ENCODE measurements at regions of chr19 and their contacts with region 1.

Region 1: GRCh38 chr19:45059278-45059965 is 16.9 kb downstream of the ZNF296 start:
- DNase-seq: peak; percentile 60 to 81 (median 67)
- ATAC-seq: peak; percentile 45 to 78 (median 69)
- H3K4me3 ChIP-seq: no peak overlapping the region
- H3K27ac ChIP-seq: no peak overlapping the region
- H3K4me1 ChIP-seq: no peaks in the 10 kb centered on the region
- H3K27me3 ChIP-seq: no peaks in the 10 kb centered on the region
- CTCF ChIP-seq: peak; percentile 69 to 91 (median 83)
- POLR2A ChIP-seq: no peak

Region 2: DNA sequence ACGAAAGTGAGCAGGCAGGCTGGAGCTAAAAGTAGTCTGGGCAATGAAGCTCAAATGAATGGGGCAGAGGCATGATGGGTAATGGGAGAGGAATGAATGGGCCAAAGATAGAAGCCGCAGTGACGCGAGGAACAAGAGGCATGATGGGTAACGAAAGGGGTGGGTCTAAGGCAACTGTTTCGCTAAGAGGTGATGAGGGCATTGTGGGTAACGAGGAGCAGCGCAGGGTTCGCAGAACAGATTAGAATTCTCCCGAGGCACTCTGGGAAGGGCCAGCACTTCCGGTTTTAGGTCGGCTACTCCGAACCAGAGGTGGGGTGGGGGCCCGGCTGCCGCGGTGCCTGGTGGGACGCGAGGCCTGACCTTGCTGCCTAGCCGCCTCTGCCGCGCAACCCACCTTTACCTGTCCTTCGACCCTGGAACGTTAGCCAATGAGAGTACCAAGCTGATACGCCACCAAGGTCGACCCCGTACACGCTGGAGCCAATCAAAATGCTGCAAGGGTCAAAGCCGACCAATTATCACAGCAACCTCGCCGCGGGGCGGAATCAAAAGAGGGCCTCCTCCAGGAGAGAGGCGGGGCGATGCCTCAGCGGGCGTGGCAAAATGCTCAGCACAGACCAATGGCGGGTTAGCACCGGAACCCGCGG is 168.9 kb before region 1 on chr19:
- intact Hi-C with region 1: loop called in 1 of 10 experiments (anchors 10 kb)
- DNase-seq: peak in 3 of 5 donors; percentile 100
- ATAC-seq: peak; percentile 92 to 95 (median 94)
- H3K4me3 ChIP-seq: peak overlapping the region; percentile 28 to 100 (median 73)
- H3K27ac ChIP-seq: peak overlapping the region; percentile 86 to 96 (median 94)
- H3K4me1 ChIP-seq: peaks cover 0 to 31% (median 21%) of the 10 kb centered on the region in 12 donors
- H3K27me3 ChIP-seq: no peaks in the 10 kb centered on the region
- CTCF ChIP-seq: no peak
- POLR2A ChIP-seq: peak in 1 of 2 donors; percentile 69

Region 3: GRCh38 chr19:45123430-45123850 is 64.0 kb after region 1 on chr19:
- intact Hi-C with region 1: no loop called
- DNase-seq: no peak
- ATAC-seq: no peak
- H3K4me3 ChIP-seq: no peak overlapping the region
- H3K27ac ChIP-seq: no peak overlapping the region
- H3K4me1 ChIP-seq: peaks cover 0 to 12% (median 4%) of the 10 kb centered on the region in 12 donors
- H3K27me3 ChIP-seq: no peaks in the 10 kb centered on the region
- CTCF ChIP-seq: no peak
- POLR2A ChIP-seq: no peak

Region 4: DNA sequence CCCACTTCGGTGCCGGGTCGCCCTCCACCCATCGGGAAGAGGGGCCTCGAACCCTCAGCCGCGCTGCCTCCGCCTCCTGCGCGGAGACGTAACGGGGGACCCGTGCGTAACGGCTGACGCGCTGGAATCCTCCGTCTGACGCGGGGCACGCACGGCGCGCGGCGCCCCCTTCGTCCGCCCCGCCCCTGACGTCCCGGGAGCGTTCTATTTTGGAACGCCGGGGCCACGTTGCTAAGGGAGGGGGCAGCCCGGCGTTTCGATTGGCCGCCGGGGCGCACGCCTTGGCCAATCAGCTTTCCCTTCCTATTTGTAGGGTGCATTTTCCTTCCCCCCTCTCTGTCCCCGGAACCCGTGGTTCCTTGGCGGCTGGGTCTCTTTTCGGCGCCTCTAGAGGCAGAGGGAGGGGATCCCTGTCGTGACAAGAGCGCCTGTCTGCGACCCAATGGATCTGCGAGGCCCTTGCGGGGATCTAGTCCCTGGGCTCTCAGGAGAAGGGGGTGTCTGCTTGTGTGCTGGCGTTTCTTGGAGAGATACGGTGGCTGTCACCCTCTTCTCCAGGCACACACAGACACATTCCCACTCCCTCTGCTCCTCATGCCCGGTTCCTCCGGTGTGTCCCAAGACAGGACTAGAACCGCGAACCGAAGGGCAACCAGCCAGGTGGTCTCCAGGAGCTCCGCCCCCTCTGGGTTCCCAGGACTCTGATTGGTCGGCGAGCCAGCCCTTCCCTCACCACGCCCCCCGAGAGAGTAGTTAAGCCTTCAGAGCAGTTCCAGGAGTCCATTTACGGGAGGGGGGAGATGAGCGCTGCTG is 409.9 kb after region 1 on chr19:
- intact Hi-C with region 1: no loop called
- DNase-seq: peak; percentile 94 to 97 (median 95)
- ATAC-seq: peak; percentile 89 to 92 (median 90)
- H3K4me3 ChIP-seq: peak overlapping the region; percentile 51 to 89 (median 72)
- H3K27ac ChIP-seq: peak overlapping the region; percentile 80 to 99 (median 95)
- H3K4me1 ChIP-seq: peaks cover 5 to 40% (median 26%) of the 10 kb centered on the region in 12 donors
- H3K27me3 ChIP-seq: peaks cover 0 to 15% (median 0%) of the 10 kb centered on the region in 9 donors
- CTCF ChIP-seq: peak in 3 of 12 donors; percentile 7 to 23 (median 15)
- POLR2A ChIP-seq: peak; percentile 50 to 97